ENCODE measurements at regions of chr14 and their contacts with region 1.

Region 1: GRCh38 chr14:74793506-74794168 is 30.5 kb downstream of the YLPM1 start:
- DNase-seq: no peak
- H3K4me3 ChIP-seq: no peak overlapping the region
- H3K27ac ChIP-seq: no peak overlapping the region
- H3K27me3 ChIP-seq: no peaks in the 10 kb centered on the region
- CTCF ChIP-seq: peak; percentile 39; the same call in 1 of the 2 replicates

Region 2: DNA sequence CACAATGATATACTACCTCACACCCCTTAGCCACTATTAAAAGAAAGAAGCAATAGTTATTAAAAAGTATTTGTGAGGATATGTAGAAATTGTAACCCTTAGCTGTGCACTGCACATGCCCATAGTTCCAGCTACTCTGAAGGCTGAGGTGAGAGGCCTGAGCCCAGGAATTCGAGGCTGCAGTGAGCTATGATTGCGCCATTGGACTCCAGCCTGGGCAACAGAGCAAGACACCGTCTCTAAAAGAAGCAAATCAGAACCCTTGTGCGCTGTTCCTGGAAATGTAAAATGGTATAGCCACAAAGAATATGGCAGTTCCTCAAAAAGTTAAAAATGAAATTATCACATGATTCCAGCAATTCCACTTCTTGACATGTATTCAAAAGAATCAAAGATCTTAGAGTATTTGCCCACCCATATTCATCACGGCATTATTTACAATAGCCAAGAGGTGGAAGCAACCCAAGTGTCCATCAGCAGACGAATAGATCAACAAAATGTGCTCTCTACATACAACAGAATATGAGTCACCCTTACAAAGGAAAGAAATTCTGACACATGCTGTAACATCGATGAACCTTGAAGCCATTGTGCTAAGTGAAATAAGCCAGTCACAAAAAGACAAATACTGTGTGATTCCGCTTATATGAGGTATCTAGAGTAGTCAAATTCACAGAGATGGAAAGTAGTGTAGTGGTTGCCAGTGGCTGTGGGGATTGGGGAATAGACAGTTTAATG is 54.2 kb before region 1 on chr14:
- CTCF ChIA-PET with region 1: no interaction called
- POLR2A ChIA-PET with region 1: interaction called, 13 read pairs
- DNase-seq: no peak
- H3K4me3 ChIP-seq: no peak overlapping the region
- H3K27ac ChIP-seq: no peak overlapping the region
- H3K27me3 ChIP-seq: no peaks in the 10 kb centered on the region
- CTCF ChIP-seq: no peak